SK-N-SH (cell line): ENCODE measurements at regions of chr19 and their contacts with region 1.

Region 1: GRCh38 chr19:29714953-29715700 is at the start of gene C19orf12:
- DNase-seq: peak; percentile 93
- H3K4me3 ChIP-seq: peak within 1 kb of the TSS; percentile 82 to 84
- H3K27ac ChIP-seq: peak within 1 kb of the TSS; percentile 74 to 83
- H3K4me1 ChIP-seq: peaks cover 7 to 20% of the 10 kb centered on the region in 2 experiments; a peak in 2 of 4 replicates
- H3K27me3 ChIP-seq: no peaks in the 10 kb centered on the region
- CTCF ChIP-seq: no peak
- EP300 ChIP-seq: no peak
- RAD21 ChIP-seq: no peak
- polyA plus RNA-seq, gene C19orf12: 26.4 and 30.5 TPM in 2 replicates

Region 2: DNA sequence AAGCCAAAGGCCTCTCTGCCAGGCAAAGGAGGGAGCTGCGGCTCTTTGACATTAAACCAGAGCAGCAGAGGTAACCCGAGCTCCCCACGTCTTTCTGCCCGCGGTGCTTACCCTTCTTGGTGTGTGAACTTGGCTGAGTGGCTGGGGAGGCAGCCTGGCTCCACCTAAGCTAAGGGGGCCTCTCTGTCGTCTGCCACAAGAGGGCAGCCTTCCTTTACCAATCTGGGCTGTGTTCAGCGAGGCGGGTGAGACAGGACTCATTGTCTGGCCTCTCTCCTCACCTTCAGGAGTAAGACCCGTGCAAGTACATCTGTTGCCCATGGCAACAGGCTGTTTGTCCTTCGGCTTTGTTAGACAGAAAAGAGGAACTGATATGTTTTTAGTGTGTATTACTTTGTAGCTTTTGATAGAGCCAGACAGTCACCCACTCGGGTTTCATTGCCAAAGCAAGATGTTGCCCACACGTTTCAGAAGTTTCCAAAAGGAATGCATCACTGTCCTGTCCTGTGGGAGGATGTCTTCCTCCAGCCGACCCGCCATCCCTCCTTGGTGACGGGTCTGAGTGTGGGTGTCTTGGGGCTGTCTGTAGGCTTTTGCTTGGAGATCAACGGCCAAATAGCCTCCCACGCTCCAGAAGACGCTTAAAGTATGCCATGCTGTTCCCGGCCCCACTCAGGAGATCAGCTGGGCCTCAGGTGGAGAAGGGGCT is 104.4 kb before region 1 on chr19:
- CTCF ChIA-PET with region 1: interaction called, 137 read pairs
- POLR2A ChIA-PET with region 1: interaction called, 28 read pairs
- DNase-seq: peak; percentile 90
- H3K4me3 ChIP-seq: no peak overlapping the region
- H3K27ac ChIP-seq: no peak overlapping the region
- H3K4me1 ChIP-seq: peaks cover 0 to 5% of the 10 kb centered on the region in 2 experiments; a peak in 2 of 4 replicates
- H3K27me3 ChIP-seq: no peaks in the 10 kb centered on the region
- CTCF ChIP-seq: peak; percentile 87
- EP300 ChIP-seq: no peak
- RAD21 ChIP-seq: peak; percentile 84

Region 3: GRCh38 chr19:29665215-29665825 is 49.8 kb before region 1 on chr19 and contains the start of gene PLEKHF1:
- CTCF ChIA-PET with region 1: interaction called, 19 read pairs
- POLR2A ChIA-PET with region 1: interaction called, 4 read pairs
- DNase-seq: peak; percentile 98
- H3K4me3 ChIP-seq: peak within 1 kb of the TSS; percentile 74 to 82
- H3K27ac ChIP-seq: peak within 1 kb of the TSS in 1 of 2 experiments; percentile 26; a peak in 1 of 4 replicates
- H3K4me1 ChIP-seq: peaks cover 14 to 27% of the 10 kb centered on the region in 2 experiments; a peak in 3 of 4 replicates
- H3K27me3 ChIP-seq: no peaks in the 10 kb centered on the region
- CTCF ChIP-seq: no peak
- EP300 ChIP-seq: no peak
- RAD21 ChIP-seq: peak; percentile 7; the same call in 1 of the 2 replicates
- polyA plus RNA-seq, gene PLEKHF1: 3.9 TPM in 2 replicates

Region 4: DNA sequence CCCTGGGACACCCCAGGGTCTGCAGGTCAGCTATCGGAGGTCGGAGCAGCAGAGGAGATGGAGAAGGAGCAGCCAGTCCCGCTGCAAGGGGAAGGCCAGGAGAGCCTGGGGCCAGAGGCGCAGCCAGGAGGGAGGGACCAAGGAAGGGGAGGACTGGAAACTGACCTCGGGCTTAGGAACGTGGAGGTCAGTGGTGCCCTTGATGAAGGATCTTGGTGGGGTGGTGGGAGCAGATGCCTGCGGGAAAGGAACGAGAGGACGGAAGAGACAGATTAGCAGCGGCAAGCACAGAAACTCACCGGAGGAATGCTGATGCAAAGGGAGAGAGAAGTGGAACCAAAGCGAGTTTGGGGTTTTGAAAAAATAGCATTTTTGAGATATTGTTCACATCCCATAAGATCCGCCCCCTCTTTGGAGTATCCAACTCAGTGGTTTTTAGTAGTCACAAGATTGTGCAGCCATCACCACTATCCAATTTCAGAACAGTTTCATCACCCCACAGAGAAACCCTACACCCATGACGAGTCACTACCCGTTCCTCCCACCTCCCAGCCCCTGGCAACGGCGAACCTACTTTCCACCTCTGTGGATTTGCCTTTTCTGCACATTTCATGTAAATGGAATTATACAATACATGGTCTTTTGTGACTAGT is 27.8 kb before region 1 on chr19:
- CTCF ChIA-PET with region 1: interaction called, 31 read pairs
- POLR2A ChIA-PET with region 1: no interaction called
- DNase-seq: no peak
- H3K4me3 ChIP-seq: no peak overlapping the region
- H3K27ac ChIP-seq: peak overlapping the region in 1 of 2 experiments; percentile 49; a peak in 1 of 4 replicates
- H3K4me1 ChIP-seq: peaks cover 0 to 9% of the 10 kb centered on the region in 2 experiments; a peak in 1 of 4 replicates
- H3K27me3 ChIP-seq: no peaks in the 10 kb centered on the region
- CTCF ChIP-seq: no peak
- EP300 ChIP-seq: no peak
- RAD21 ChIP-seq: no peak

Region 5: GRCh38 chr19:29704562-29705558 is 10.3 kb before region 1 on chr19:
- CTCF ChIA-PET with region 1: interaction called, 17 read pairs
- POLR2A ChIA-PET with region 1: no interaction called
- DNase-seq: no peak
- H3K4me3 ChIP-seq: no peak overlapping the region
- H3K27ac ChIP-seq: no peak overlapping the region
- H3K4me1 ChIP-seq: no peaks in the 10 kb centered on the region; a peak in 1 of 4 replicates
- H3K27me3 ChIP-seq: no peaks in the 10 kb centered on the region
- CTCF ChIP-seq: no peak
- EP300 ChIP-seq: no peak
- RAD21 ChIP-seq: no peak

Region 6: DNA sequence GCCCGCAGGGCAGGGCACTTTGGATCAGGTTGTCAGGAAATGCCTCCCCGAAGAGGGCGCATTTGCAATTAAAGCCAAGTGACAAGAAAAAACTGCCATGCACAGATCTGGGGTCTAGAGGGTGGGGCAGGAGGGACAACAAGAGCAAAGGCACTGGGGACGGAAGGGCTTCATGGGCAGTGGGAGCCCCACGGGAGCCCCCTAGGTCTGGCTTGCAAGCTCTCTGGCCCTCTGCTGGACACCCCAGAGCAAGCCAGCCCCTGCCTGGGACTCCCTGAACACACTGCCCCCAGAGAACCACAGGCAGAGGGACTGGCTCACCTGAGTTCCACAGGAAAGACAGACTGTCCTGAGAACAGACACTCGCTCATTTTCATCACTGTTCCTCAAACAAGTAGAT is 30.1 kb after region 1 on chr19:
- CTCF ChIA-PET with region 1: interaction called, 12 read pairs
- POLR2A ChIA-PET with region 1: no interaction called
- DNase-seq: peak; percentile 40
- H3K4me3 ChIP-seq: no peak overlapping the region
- H3K27ac ChIP-seq: no peak overlapping the region
- H3K4me1 ChIP-seq: no peaks in the 10 kb centered on the region
- H3K27me3 ChIP-seq: no peaks in the 10 kb centered on the region; the same call in 1 of the 2 replicates
- CTCF ChIP-seq: peak; percentile 29
- EP300 ChIP-seq: no peak
- RAD21 ChIP-seq: no peak